Activated T-helper 1 cell treated with anti-CD3 and anti-CD28 coated beads, Interleukin-12 subunit alpha, Interleukin-12 subunit beta, Interleukin-2, Interleukin-4 antibody, amounts not matched to agents 30 ng/mL and 10 ng/mL and 1 ng/mL, durations not matched to agents 14 hours and 24 hours and 36 hours (primary cell): ENCODE measurements at regions of chr10 and their contacts with region 1.

Region 1: GRCh38 chr10:124741281-124741921 is 2.8 kb downstream of the FAM53B start:
- DNase-seq: peak; percentile 57
- H3K4me3 Mint-ChIP-seq: peak overlapping the region; percentile 97
- H3K27ac Mint-ChIP-seq: peak overlapping the region; percentile 76
- H3K4me1 Mint-ChIP-seq: peaks cover 56% of the 10 kb centered on the region
- H3K27me3 Mint-ChIP-seq: peaks cover 7% of the 10 kb centered on the region

Region 2: DNA sequence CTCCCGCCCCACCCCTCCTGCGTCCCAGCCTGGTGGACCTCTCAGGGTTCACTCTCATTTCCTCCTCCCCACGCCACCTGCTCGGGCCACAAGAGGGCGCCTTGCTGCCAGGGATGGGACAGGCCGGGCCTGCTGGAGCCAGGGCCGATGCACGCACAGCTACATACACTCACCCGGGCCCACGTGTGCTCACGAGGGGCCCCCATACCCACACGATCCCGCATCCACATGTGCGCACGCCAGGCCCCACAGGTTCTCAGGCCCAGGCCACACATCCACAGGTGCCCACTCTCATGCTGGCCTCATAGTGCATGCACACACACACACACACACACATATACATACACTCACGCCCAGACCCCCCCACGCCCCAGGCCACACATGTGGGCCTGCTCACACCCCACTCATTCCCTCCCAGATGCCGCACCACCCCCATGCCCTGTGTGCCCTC is 211.2 kb before region 1 on chr10:
- intact Hi-C with region 1: loop called (anchors 1 kb)
- DNase-seq: peak; percentile 78
- H3K4me3 Mint-ChIP-seq: no peak overlapping the region
- H3K27ac Mint-ChIP-seq: no peak overlapping the region
- H3K4me1 Mint-ChIP-seq: peaks cover 5% of the 10 kb centered on the region
- H3K27me3 Mint-ChIP-seq: peaks cover 10% of the 10 kb centered on the region

Region 3: DNA sequence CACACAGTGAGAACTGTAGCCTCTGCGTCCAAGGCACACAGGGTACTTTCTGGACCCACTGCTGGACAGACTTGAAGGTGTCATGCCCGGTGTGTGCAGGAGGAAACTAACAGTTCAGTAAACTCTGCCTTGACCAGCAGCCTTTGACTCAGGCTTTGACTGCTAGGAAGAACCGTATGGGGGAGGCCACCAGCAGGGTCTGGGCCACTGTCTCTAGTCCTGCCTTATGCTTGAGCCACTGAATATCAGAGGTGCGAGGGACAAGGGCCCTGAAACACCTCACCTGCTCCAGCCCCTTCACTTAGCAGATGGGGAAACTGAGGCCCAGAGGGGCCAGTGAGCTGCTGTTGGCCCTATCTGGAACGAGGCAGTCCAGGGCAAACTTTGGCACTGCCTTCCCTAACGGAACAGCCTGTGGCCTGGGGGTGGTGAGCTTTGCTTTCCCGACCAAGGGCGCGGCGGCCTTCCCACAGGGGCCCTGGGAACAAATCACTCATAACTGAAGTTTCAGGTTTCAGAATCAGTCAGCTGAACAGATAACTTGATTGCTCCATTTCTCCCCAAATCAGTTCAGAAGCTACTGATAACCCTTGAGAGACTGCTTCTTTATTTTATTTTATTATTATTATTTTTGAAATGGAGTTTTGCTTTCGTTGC is 127.3 kb before region 1 on chr10:
- intact Hi-C with region 1: loop called (anchors 1 kb)
- DNase-seq: peak; percentile 41
- H3K4me3 Mint-ChIP-seq: no peak overlapping the region
- H3K27ac Mint-ChIP-seq: no peak overlapping the region
- H3K4me1 Mint-ChIP-seq: peaks cover 40% of the 10 kb centered on the region
- H3K27me3 Mint-ChIP-seq: peaks cover 2% of the 10 kb centered on the region

Region 4: DNA sequence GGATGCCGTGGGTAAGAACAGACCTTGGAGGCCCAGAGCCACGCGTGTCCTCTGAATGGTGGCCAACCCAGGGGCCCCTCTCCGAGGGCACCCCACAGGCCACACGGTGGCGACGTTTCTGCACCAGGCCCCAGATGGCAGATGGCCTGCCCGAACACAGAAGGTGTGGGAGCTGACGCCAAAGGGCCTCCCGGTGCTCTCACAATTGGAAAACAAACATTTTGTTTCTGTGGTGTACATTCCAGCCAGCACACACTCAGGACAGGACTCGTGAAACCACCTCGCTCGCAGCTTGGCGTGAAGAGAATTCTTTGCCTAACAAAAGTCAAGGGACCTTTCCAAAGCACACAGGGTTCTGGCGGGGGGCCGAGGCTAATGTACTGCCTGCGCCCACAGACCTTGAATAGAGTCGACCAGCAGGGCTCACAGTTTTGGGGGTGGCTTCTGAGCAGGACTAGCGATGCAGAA is 109.3 kb before region 1 on chr10:
- intact Hi-C with region 1: loop called (anchors 1 kb)
- DNase-seq: no peak
- H3K4me3 Mint-ChIP-seq: no peak overlapping the region
- H3K27ac Mint-ChIP-seq: no peak overlapping the region
- H3K4me1 Mint-ChIP-seq: peaks cover 28% of the 10 kb centered on the region
- H3K27me3 Mint-ChIP-seq: peaks cover 5% of the 10 kb centered on the region

Region 5: GRCh38 chr10:124688889-124689670 is 52.3 kb before region 1 on chr10:
- intact Hi-C with region 1: loop called (anchors 1 kb)
- DNase-seq: peak; percentile 73
- H3K4me3 Mint-ChIP-seq: peak overlapping the region; percentile 48
- H3K27ac Mint-ChIP-seq: peak overlapping the region; percentile 86
- H3K4me1 Mint-ChIP-seq: peaks cover 76% of the 10 kb centered on the region
- H3K27me3 Mint-ChIP-seq: no peaks in the 10 kb centered on the region

Region 6: GRCh38 chr10:124791378-124792348 is 50.3 kb after region 1 on chr10 and contains the start of gene EEF1AKMT2:
- intact Hi-C with region 1: loop called (anchors 1 kb)
- DNase-seq: peak; percentile 78
- H3K4me3 Mint-ChIP-seq: peak within 1 kb of the TSS; percentile 94
- H3K27ac Mint-ChIP-seq: peak within 1 kb of the TSS; percentile 92
- H3K4me1 Mint-ChIP-seq: peaks cover 24% of the 10 kb centered on the region
- H3K27me3 Mint-ChIP-seq: peaks cover 3% of the 10 kb centered on the region
- total RNA-seq, gene EEF1AKMT2: 20.5 and 21.3 TPM in 2 replicates

Region 7: GRCh38 chr10:124878457-124878739 is 137.0 kb after region 1 on chr10:
- intact Hi-C with region 1: no loop called
- DNase-seq: no peak
- H3K4me3 Mint-ChIP-seq: no peak overlapping the region
- H3K27ac Mint-ChIP-seq: no peak overlapping the region
- H3K4me1 Mint-ChIP-seq: no peaks in the 10 kb centered on the region
- H3K27me3 Mint-ChIP-seq: peaks cover 5% of the 10 kb centered on the region

Region 8: GRCh38 chr10:124916585-124917427 is 175.4 kb after region 1 on chr10:
- intact Hi-C with region 1: loop called (anchors 5 kb)
- DNase-seq: peak; percentile 96
- H3K4me3 Mint-ChIP-seq: peak overlapping the region; percentile 93
- H3K27ac Mint-ChIP-seq: peak overlapping the region; percentile 96
- H3K4me1 Mint-ChIP-seq: peaks cover 40% of the 10 kb centered on the region
- H3K27me3 Mint-ChIP-seq: peaks cover 9% of the 10 kb centered on the region